Sciatic nerve (tissue), 2 donors: ENCODE measurements at regions of chr17 and their contacts with region 1.

Region 1: DNA sequence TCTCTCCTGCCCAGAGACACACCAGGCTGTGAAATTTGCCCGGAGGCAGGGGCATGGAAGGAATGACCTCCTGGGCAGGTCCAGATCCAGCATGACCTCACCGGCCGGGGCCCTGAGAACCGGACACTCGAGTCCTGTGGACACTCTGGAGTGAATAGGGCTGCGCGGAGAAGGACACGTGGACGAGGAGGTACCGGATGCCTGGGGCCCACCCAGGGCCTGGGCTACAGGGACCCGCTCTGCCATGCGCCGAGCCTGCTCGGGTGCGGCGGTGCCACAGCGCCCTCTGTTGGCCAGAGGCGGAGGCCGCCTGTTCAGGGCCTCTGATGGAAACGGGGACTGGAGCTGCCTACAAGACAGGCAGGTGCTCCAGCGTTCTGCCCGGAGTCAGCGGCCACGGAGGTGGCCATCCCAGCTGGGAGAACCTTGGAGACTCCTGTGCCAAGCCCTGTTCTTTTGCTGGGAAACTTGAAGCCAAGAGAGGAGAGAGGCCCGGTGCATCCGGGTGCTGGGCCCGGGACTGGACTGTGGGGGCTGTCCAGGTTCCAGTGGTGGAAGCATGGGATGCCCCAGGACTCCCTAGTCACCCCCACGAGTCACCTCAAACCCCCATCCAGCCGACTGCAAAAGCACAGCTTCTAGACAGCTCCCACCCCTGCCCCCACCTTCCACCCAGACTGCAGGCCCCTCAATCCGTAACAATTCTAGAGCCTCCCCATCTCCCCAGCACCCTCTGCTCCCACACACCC is 19.3 kb upstream of the NXPH3 start:
- DNase-seq: peak; percentile 90
- ATAC-seq: peak; percentile 92

Region 2: DNA sequence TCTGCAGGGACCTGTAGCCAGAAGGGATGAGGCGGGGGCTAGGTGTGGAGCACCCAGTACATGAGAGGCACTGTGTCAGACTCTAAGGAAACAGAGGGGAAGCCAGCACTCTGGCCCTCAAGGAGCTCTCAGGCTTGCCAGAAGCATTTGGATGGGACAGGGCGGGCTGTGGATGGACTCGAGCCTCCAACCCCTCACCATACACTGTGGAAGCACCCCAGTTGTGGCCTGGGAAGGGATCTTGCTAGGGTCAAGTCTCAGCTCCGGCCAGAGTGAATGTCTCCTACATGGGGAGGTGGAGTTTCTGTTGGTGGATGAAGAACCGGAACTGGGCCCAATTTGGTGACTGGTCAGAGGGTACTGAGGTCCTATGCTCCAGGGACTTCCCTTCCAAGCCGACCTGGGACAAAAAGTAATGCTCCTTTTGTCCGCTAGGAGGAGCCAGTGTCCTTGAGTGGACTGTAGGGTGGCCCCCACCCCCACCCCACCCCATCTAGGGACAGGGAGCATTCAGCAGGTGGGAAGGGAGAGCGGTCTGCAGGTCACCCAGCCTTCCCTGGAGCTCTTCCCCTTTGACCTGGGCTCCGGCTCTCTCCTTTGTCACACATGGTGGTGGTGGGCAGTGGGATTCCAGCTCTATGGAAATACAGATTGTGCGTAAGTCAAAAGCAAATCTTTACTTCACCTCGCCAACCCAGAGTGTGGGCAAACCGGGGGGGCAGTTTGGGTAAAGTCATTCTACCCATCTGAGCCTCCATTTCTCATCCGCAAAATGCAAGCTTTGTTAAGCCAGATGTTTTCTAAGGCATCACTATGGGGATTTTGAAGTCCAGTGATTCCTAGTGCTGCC is 121.4 kb before region 1 on chr17:
- intact Hi-C with region 1: loop called (anchors 10 kb)
- DNase-seq: no peak
- ATAC-seq: peak; percentile 70

Region 3: GRCh38 chr17:50079334-50080095 is 523.1 kb after region 1 on chr17:
- intact Hi-C with region 1: no loop called
- DNase-seq: no peak
- ATAC-seq: peak; percentile 43